Activated B cell treated with CpG ODN at 0.5 μM for 24 hours (primary cell): ENCODE measurements at regions of chr9 and their contacts with region 1.

Region 1: DNA sequence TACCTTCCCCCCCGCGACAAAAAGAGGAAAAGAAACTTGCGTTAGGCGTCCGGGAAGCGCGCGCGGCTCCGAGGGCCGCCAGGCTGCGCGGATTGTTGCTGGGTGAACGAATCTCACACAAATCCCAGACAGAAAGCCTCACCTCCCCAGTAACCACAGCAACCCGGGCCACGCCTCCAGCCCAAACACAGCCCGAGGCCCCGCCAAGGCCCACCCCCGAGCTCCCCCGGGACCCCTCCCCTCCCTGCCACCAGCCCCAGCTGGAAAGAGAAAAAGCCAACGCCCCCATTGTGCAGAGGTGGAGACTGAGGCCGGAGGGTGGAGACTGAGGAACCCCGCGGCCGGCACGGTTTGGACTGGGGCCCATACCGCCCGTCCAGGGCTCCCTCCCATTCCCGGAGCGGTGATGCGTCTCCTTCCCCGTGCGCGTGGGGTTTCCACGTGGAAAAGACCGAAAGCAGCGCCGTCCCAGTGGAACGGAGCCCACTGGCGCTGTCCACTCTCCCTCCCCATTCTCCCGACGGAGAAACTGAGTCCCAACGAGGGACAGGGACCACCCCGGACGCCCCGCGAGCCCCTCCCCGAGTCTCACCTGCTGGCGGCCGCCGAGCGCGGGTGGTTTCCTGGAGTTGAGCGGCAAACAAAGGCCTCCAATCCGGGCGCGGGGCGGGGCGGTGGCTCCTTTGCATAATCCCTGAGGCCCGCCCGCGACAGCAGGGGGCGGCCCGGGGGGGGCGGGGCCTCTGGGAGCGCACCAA is 10.2 kb upstream of the AKNA start:
- DNase-seq: peak; percentile 96
- ATAC-seq: peak; percentile 78
- H3K4me3 Mint-ChIP-seq: peak overlapping the region; percentile 89
- H3K27ac Mint-ChIP-seq: peak overlapping the region; percentile 94
- H3K4me1 Mint-ChIP-seq: peaks cover 49% of the 10 kb centered on the region
- H3K27me3 Mint-ChIP-seq: no peaks in the 10 kb centered on the region
- CTCF ChIP-seq: no peak

Region 2: GRCh38 chr9:114348906-114349482 is 49.0 kb before region 1 on chr9:
- CTCF ChIA-PET with region 1: interaction called, 3 read pairs
- POLR2A ChIA-PET with region 1: interaction called, 30 read pairs
- intact Hi-C with region 1: loop called (anchors 1 kb)
- DNase-seq: peak; percentile 77
- ATAC-seq: peak; percentile 94
- H3K4me3 Mint-ChIP-seq: peak overlapping the region; percentile 58
- H3K27ac Mint-ChIP-seq: peak overlapping the region; percentile 94
- H3K4me1 Mint-ChIP-seq: peaks cover 44% of the 10 kb centered on the region
- H3K27me3 Mint-ChIP-seq: no peaks in the 10 kb centered on the region
- CTCF ChIP-seq: no peak

Region 3: DNA sequence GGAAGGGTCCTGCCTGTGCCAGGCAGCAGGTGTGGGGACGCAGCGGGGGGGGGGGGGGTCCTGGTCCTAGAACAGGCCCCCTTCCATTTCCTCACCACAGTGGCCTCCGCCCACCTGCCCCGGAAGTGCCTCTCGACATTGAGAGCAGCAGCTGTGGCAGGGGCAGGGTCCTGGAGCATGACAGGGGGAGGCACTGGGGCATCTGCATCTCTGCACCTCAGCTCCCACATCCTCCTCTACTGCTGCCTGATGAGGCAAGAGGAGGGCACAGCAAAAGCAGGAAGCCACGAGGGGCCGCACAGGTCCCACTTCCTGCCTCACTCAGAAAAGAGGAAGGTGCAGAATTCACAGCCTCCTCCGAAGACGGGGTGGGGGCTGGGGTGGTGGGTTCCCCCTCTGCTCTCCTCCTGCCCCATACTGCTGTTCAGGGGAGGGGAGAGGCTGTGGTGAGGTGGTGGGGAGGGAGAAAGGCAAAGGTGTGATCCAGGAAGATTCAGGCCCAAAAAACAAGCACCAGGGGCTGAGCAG is 25.0 kb before region 1 on chr9:
- CTCF ChIA-PET with region 1: interaction called, 5 read pairs
- POLR2A ChIA-PET with region 1: interaction called, 913 read pairs
- intact Hi-C with region 1: loop called (anchors 1 kb)
- DNase-seq: peak; percentile 78
- ATAC-seq: peak; percentile 94
- H3K4me3 Mint-ChIP-seq: peak overlapping the region; percentile 72
- H3K27ac Mint-ChIP-seq: peak overlapping the region; percentile 98
- H3K4me1 Mint-ChIP-seq: peaks cover 92% of the 10 kb centered on the region
- H3K27me3 Mint-ChIP-seq: no peaks in the 10 kb centered on the region
- CTCF ChIP-seq: no peak

Region 4: DNA sequence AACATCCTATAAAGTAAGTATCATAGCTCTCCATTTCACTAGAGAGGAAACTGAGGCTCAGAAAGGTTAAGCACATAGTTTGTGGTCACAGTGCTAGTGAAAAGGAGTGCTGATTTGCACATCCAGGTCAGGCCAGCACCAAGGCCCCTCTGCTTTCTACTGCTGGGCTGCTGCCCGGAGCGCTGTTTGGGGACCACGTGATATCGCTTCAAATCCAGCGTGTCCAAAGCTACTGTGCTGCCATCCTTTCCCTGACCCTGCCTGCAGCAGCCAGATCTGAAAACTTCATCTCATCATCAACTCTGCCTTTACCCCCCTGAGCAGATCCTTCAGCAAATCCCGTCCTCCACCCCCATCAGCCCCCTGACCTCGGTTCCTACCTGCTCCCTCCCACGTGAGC is 30.4 kb after region 1 on chr9:
- CTCF ChIA-PET with region 1: no interaction called
- POLR2A ChIA-PET with region 1: no interaction called
- intact Hi-C with region 1: no loop called
- DNase-seq: no peak
- ATAC-seq: no peak
- H3K4me3 Mint-ChIP-seq: no peak overlapping the region
- H3K27ac Mint-ChIP-seq: no peak overlapping the region
- H3K4me1 Mint-ChIP-seq: no peaks in the 10 kb centered on the region
- H3K27me3 Mint-ChIP-seq: no peaks in the 10 kb centered on the region
- CTCF ChIP-seq: no peak

Region 5: GRCh38 chr9:114452219-114453165 is 54.5 kb after region 1 on chr9:
- CTCF ChIA-PET with region 1: interaction called, 4 read pairs
- POLR2A ChIA-PET with region 1: interaction called, 10 read pairs
- intact Hi-C with region 1: loop called (anchors 1 kb)
- DNase-seq: peak; percentile 61
- ATAC-seq: peak; percentile 35
- H3K4me3 Mint-ChIP-seq: peak overlapping the region; percentile 55
- H3K27ac Mint-ChIP-seq: peak overlapping the region; percentile 95
- H3K4me1 Mint-ChIP-seq: peaks cover 61% of the 10 kb centered on the region
- H3K27me3 Mint-ChIP-seq: no peaks in the 10 kb centered on the region
- CTCF ChIP-seq: no peak

Region 6: DNA sequence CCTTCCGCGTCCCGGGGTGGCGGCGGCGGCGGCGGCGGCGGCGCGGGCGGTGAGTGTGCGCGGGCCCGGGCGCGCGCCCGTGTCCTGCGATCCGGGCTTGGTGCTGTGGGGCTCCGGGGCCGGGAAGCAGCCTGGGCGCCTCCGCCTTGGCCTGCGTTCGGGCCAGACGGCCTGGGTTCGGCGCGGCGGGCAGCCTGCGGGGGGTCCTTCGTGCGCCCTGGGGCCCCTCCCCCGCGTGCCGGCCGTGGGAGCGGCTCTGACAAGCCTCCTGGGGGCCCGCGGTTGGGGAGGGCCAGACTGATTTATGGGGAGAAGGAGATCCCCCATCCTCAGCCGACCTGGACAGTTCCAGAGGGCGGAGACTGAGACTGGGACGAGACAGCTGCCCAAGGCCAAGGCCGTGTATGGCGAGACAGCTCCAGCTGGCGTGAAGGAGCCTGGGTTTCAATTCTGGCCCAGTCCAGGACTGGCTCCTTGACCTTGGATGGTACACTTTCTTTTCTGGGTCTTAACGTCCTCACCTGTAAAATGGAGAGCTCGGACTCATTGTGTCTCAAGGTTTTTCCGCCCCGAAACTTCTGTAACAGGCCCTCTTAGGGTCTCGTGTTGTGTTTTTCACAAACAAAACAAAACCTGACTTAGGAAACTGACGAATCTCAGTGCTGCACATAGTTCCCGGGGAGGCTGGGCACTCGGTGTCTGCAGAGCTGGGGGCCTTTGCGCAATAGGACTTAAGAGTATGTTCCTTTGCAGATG is 213.7 kb after region 1 on chr9:
- CTCF ChIA-PET with region 1: no interaction called
- POLR2A ChIA-PET with region 1: interaction called, 10 read pairs
- intact Hi-C with region 1: no loop called
- DNase-seq: no peak
- ATAC-seq: peak; percentile 51
- H3K4me3 Mint-ChIP-seq: peak overlapping the region; percentile 90
- H3K27ac Mint-ChIP-seq: peak overlapping the region; percentile 95
- H3K4me1 Mint-ChIP-seq: peaks cover 85% of the 10 kb centered on the region
- H3K27me3 Mint-ChIP-seq: no peaks in the 10 kb centered on the region
- CTCF ChIP-seq: no peak

Region 7: GRCh38 chr9:114894801-114895433 is 496.9 kb after region 1 on chr9:
- CTCF ChIA-PET with region 1: no interaction called
- POLR2A ChIA-PET with region 1: interaction called, 3 read pairs
- intact Hi-C with region 1: loop called (anchors 10 kb)
- DNase-seq: no peak
- ATAC-seq: no peak
- H3K4me3 Mint-ChIP-seq: no peak overlapping the region
- H3K27ac Mint-ChIP-seq: peak overlapping the region; percentile 84
- H3K4me1 Mint-ChIP-seq: peaks cover 52% of the 10 kb centered on the region
- H3K27me3 Mint-ChIP-seq: no peaks in the 10 kb centered on the region
- CTCF ChIP-seq: no peak